Activated naive CD4-positive, alpha-beta T cell treated with anti-CD3 and anti-CD28 coated beads for 36 hours (primary cell): ENCODE measurements at regions of chr16 and their contacts with region 1.

Region 1: GRCh38 chr16:74431516-74431915 is 10.2 kb upstream of the CLEC18B start:
- DNase-seq: no peak
- H3K4me3 Mint-ChIP-seq: no peak overlapping the region
- H3K27ac Mint-ChIP-seq: no peak overlapping the region
- H3K4me1 Mint-ChIP-seq: no peaks in the 10 kb centered on the region
- H3K27me3 Mint-ChIP-seq: no peaks in the 10 kb centered on the region

Region 2: DNA sequence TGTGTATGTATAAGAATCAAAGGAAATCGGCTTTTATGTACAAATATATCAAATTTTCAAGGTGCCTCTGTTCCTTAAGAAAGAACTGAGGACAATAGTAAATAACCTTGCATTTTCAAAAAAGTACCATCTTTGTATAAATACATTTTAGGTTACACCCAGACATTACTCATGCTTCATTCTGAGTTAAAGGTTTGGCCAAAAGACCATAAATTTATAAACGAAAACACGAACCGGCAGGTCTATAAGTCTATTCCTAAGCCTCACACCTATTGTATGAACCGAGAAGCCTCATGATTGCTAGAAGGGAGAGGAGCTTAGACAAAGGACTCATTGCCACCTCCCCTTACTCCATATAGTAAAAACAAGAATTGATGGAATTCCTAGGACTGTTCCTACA is 229.5 kb before region 1 on chr16:
- CTCF ChIA-PET with region 1: no interaction called
- intact Hi-C with region 1: no loop called
- DNase-seq: no peak
- H3K4me3 Mint-ChIP-seq: no peak overlapping the region
- H3K27ac Mint-ChIP-seq: no peak overlapping the region
- H3K4me1 Mint-ChIP-seq: no peaks in the 10 kb centered on the region
- H3K27me3 Mint-ChIP-seq: no peaks in the 10 kb centered on the region

Region 3: GRCh38 chr16:74309789-74310781 is 121.4 kb before region 1 on chr16:
- CTCF ChIA-PET with region 1: interaction called, 3 read pairs
- intact Hi-C with region 1: loop called (anchors 2 kb)
- DNase-seq: peak; percentile 44
- H3K4me3 Mint-ChIP-seq: no peak overlapping the region
- H3K27ac Mint-ChIP-seq: no peak overlapping the region
- H3K4me1 Mint-ChIP-seq: no peaks in the 10 kb centered on the region
- H3K27me3 Mint-ChIP-seq: no peaks in the 10 kb centered on the region

Region 4: GRCh38 chr16:74372953-74373846 is 58.3 kb before region 1 on chr16:
- CTCF ChIA-PET with region 1: no interaction called
- intact Hi-C with region 1: loop called (anchors 5 kb)
- DNase-seq: no peak
- H3K4me3 Mint-ChIP-seq: no peak overlapping the region
- H3K27ac Mint-ChIP-seq: no peak overlapping the region
- H3K4me1 Mint-ChIP-seq: peaks cover 2% of the 10 kb centered on the region
- H3K27me3 Mint-ChIP-seq: no peaks in the 10 kb centered on the region